ENCODE measurements at regions of chr10 and their contacts with region 1.

Region 1: DNA sequence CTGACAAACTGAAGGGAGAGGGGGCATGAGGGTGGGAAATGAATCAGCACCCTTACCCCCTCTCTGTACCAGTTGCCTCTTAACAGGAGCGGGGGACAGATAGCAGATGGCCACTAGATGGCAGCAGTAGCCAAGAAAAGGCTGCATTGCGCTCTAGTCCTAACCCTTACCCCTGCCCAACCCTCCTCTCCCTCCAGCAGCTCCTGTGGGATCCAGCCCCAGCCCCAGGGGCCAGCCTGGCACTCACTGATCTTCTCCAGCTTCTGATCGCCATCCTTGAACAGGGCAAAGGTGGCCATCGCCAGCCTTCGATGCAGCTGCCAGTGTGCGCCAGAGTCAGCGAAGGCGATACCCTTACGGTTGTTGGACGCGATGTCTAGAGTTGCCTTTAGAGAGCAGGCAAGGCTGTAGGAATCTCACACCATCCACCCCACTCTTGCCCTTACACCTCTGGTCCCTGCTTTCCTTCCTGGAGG is 2.2 kb downstream of the CYP17A1 start:
- DNase-seq: peak; percentile 82
- ATAC-seq: peak; percentile 96
- H3K4me3 ChIP-seq: no peak overlapping the region
- H3K4me3 Mint-ChIP-seq: no peak overlapping the region
- H3K27ac ChIP-seq: no peak overlapping the region
- H3K27ac Mint-ChIP-seq: no peak overlapping the region
- H3K4me1 ChIP-seq: peaks cover 0 to 4% of the 10 kb centered on the region in 2 donors
- H3K4me1 Mint-ChIP-seq: peaks cover 2% of the 10 kb centered on the region
- H3K27me3 ChIP-seq: peaks cover 0 to 11% (median 2%) of the 10 kb centered on the region in 4 experiments
- H3K27me3 Mint-ChIP-seq: peaks cover 6% of the 10 kb centered on the region
- CTCF ChIP-seq: peak; percentile 89

Region 2: GRCh38 chr10:100997360-100998182 is 1837.5 kb before region 1 on chr10:
- CTCF ChIA-PET with region 1: no interaction called
- POLR2A ChIA-PET with region 1: no interaction called
- intact Hi-C with region 1: no loop called
- DNase-seq: peak; percentile 85
- ATAC-seq: peak; percentile 40
- H3K4me3 ChIP-seq: peak overlapping the region; percentile 53 to 89 (median 86)
- H3K4me3 Mint-ChIP-seq: peak overlapping the region; percentile 95
- H3K27ac ChIP-seq: peak overlapping the region; percentile 84 to 87
- H3K27ac Mint-ChIP-seq: peak overlapping the region; percentile 97
- H3K4me1 ChIP-seq: peaks cover 22 to 34% of the 10 kb centered on the region in 2 donors
- H3K4me1 Mint-ChIP-seq: peaks cover 29% of the 10 kb centered on the region
- H3K27me3 ChIP-seq: peaks cover 0 to 2% (median 0%) of the 10 kb centered on the region in 4 experiments
- H3K27me3 Mint-ChIP-seq: no peaks in the 10 kb centered on the region
- CTCF ChIP-seq: peak; percentile 98

Region 3: GRCh38 chr10:102904346-102904745 is 69.3 kb after region 1 on chr10:
- CTCF ChIA-PET with region 1: interaction called, 13 read pairs
- POLR2A ChIA-PET with region 1: no interaction called
- intact Hi-C with region 1: loop called (anchors 1 kb)
- DNase-seq: no peak
- ATAC-seq: no peak
- H3K4me3 ChIP-seq: no peak overlapping the region
- H3K4me3 Mint-ChIP-seq: no peak overlapping the region
- H3K27ac ChIP-seq: no peak overlapping the region
- H3K27ac Mint-ChIP-seq: no peak overlapping the region
- H3K4me1 ChIP-seq: no peaks in the 10 kb centered on the region
- H3K4me1 Mint-ChIP-seq: no peaks in the 10 kb centered on the region
- H3K27me3 ChIP-seq: no peaks in the 10 kb centered on the region
- H3K27me3 Mint-ChIP-seq: no peaks in the 10 kb centered on the region
- CTCF ChIP-seq: no peak

Region 4: DNA sequence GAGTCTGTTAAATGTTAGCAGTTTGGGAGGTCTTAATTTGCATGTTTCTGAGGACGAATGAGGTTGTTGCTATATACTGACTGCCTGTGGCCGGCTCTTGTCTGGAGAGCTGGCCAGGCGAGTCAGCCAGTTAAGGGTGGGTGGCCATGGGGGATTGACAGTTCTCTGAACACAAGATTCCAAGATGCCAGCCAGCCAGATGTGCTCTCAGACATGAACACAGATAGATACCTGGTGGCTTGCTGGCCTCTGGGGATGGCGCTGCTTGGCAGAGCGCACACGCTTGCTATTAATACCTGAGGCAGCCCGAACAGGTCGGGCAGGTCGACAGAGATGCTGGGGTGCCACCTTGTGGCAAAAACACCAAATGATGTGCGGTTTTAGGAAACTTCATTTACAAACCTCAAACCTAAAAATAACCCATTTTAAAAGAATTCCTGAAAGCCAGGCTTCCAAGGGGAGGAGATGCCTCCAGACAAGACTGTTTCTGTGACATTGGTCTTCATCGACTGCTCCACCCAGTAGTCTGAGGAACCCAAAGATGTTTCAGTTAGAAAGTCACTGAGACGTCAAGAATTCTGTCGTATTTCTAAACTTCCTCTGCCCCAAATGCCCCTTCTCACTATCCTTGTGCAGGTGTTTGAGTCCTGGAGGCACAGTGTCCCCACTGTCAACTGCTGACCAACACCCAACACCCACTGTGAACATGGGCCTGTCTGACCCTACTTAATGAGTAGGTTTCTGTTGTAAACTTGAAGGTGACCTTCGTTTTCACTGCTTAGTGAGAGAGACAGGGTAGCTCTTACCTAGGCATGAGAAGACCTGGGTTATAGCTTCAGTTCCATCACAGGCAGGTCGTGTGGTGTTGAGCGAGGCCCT is 234.6 kb after region 1 on chr10:
- CTCF ChIA-PET with region 1: interaction called, 23 read pairs
- POLR2A ChIA-PET with region 1: interaction called, 5 read pairs
- intact Hi-C with region 1: no loop called
- DNase-seq: peak; percentile 82
- ATAC-seq: peak; percentile 80
- H3K4me3 ChIP-seq: peak overlapping the region in 1 of 5 experiments; percentile 39
- H3K4me3 Mint-ChIP-seq: peak overlapping the region; percentile 64
- H3K27ac ChIP-seq: peak overlapping the region; percentile 50 to 73
- H3K27ac Mint-ChIP-seq: peak overlapping the region; percentile 67
- H3K4me1 ChIP-seq: peaks cover 26% of the 10 kb centered on the region in 2 donors
- H3K4me1 Mint-ChIP-seq: peaks cover 33% of the 10 kb centered on the region
- H3K27me3 ChIP-seq: no peaks in the 10 kb centered on the region
- H3K27me3 Mint-ChIP-seq: no peaks in the 10 kb centered on the region
- CTCF ChIP-seq: peak; percentile 80

Region 5: GRCh38 chr10:103333925-103334520 is 499.0 kb after region 1 on chr10:
- CTCF ChIA-PET with region 1: interaction called, 21 read pairs
- POLR2A ChIA-PET with region 1: no interaction called
- intact Hi-C with region 1: loop called (anchors 1 kb)
- DNase-seq: peak; percentile 36
- ATAC-seq: no peak
- H3K4me3 ChIP-seq: no peak overlapping the region
- H3K4me3 Mint-ChIP-seq: no peak overlapping the region
- H3K27ac ChIP-seq: no peak overlapping the region
- H3K27ac Mint-ChIP-seq: no peak overlapping the region
- H3K4me1 ChIP-seq: no peaks in the 10 kb centered on the region
- H3K4me1 Mint-ChIP-seq: no peaks in the 10 kb centered on the region
- H3K27me3 ChIP-seq: no peaks in the 10 kb centered on the region
- H3K27me3 Mint-ChIP-seq: no peaks in the 10 kb centered on the region
- CTCF ChIP-seq: peak; percentile 81